Esophagus muscularis mucosa (tissue), 4 donors: ENCODE measurements at regions of chr10 and their contacts with region 1.

Region 1: GRCh38 chr10:13787015-13787421 is 200.3 kb downstream of the PRPF18 start:
- DNase-seq: no peak
- H3K4me3 ChIP-seq: no peak overlapping the region
- H3K27ac ChIP-seq: peak overlapping the region; percentile 49 to 72 (median 61)
- H3K4me1 ChIP-seq: peaks cover 28 to 34% (median 31%) of the 10 kb centered on the region in 4 donors
- H3K27me3 ChIP-seq: no peaks in the 10 kb centered on the region
- CTCF ChIP-seq: no peak
- EP300 ChIP-seq: no peak
- POLR2A ChIP-seq: no peak

Region 2: DNA sequence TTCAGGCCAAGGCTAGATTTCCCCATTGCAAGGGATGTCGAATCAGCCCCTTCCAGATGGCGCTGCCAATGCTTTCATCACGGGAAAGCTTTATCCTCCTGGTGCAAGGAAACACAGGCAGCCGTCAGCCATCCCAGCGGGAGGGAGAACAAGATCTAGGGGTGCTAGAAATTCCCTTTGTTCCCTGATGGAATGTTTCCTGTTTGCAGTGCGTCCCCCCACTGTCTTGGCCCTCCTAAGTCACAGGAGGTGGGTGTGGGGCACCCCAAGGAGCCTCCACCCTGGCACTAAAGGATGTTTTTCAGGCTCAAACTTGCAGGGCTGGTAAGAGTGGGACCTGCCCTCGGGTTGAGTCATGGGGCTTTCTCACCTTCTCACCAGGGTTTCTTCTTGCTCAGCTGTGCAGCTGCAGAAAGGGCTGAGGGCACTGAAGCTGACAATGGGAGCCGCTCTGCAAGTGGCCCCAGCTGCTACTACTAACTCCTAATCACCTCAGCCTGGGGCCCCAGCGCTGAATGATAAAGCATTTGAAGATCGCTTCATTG is 96.7 kb before region 1 on chr10:
- intact Hi-C with region 1: no loop called
- DNase-seq: no peak
- H3K4me3 ChIP-seq: no peak overlapping the region
- H3K27ac ChIP-seq: no peak overlapping the region
- H3K4me1 ChIP-seq: peaks cover 25 to 27% (median 25%) of the 10 kb centered on the region in 4 donors
- H3K27me3 ChIP-seq: no peaks in the 10 kb centered on the region
- CTCF ChIP-seq: no peak
- EP300 ChIP-seq: no peak
- POLR2A ChIP-seq: no peak

Region 3: DNA sequence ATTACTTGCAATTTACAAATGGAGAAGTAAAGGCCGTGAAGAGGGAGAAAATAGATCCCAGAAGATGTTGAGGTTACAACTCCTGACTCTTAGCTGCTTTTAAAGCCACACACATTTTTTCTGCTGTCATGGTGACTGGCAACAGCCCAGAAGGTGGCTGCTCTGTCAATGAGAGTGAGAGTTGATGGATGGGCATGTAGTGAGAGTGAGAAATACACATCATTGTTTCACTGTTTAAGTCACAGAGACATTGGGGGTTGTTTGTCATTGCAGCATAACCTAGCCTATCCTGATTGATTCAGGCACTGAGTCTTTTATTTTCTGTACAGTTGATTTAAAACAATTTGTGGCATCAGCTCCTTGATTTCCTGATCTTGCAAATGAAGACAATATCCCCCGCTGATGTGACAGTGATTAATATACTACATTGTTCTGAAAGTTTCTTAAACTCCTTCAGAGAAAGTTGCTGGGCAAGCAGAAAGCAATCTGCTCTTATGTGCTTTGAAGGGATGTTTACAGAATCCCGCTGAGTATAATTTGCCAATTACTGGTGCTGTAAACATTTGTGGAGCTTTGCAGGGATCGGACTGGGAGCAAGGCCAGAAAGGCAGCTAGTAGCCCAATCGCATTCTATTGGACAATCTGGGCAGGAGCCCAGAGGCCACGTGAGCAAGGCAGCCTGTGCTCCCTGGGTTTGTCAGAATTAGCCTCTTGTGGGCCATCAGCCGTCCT is 29.3 kb after region 1 on chr10:
- intact Hi-C with region 1: no loop called
- DNase-seq: no peak
- H3K4me3 ChIP-seq: no peak overlapping the region
- H3K27ac ChIP-seq: peak overlapping the region; percentile 40 to 68 (median 50)
- H3K4me1 ChIP-seq: peaks cover 18 to 38% (median 29%) of the 10 kb centered on the region in 4 donors
- H3K27me3 ChIP-seq: no peaks in the 10 kb centered on the region
- CTCF ChIP-seq: no peak
- EP300 ChIP-seq: no peak
- POLR2A ChIP-seq: no peak

Region 4: GRCh38 chr10:13956826-13957225 is 169.8 kb after region 1 on chr10:
- intact Hi-C with region 1: loop called (anchors 2 kb)
- DNase-seq: peak; percentile 94
- H3K4me3 ChIP-seq: peak overlapping the region in 1 of 4 donors; percentile 1
- H3K27ac ChIP-seq: peak overlapping the region; percentile 66 to 79 (median 76)
- H3K4me1 ChIP-seq: peaks cover 17 to 62% (median 55%) of the 10 kb centered on the region in 4 donors
- H3K27me3 ChIP-seq: no peaks in the 10 kb centered on the region
- CTCF ChIP-seq: peak; percentile 66 to 73 (median 70)
- EP300 ChIP-seq: no peak
- POLR2A ChIP-seq: no peak

Region 5: GRCh38 chr10:14093730-14094484 is 306.9 kb after region 1 on chr10:
- intact Hi-C with region 1: loop called (anchors 2 kb)
- DNase-seq: no peak
- H3K4me3 ChIP-seq: no peak overlapping the region
- H3K27ac ChIP-seq: no peak overlapping the region
- H3K4me1 ChIP-seq: peaks cover 0 to 12% (median 5%) of the 10 kb centered on the region in 4 donors
- H3K27me3 ChIP-seq: no peaks in the 10 kb centered on the region
- CTCF ChIP-seq: peak; percentile 29 to 60 (median 56)
- EP300 ChIP-seq: no peak
- POLR2A ChIP-seq: no peak

Region 6: GRCh38 chr10:14191871-14192270 is 404.9 kb after region 1 on chr10:
- intact Hi-C with region 1: loop called (anchors 10 kb)
- DNase-seq: no peak
- H3K4me3 ChIP-seq: no peak overlapping the region
- H3K27ac ChIP-seq: no peak overlapping the region
- H3K4me1 ChIP-seq: no peaks in the 10 kb centered on the region
- H3K27me3 ChIP-seq: no peaks in the 10 kb centered on the region
- CTCF ChIP-seq: no peak
- EP300 ChIP-seq: no peak
- POLR2A ChIP-seq: no peak

Region 7: DNA sequence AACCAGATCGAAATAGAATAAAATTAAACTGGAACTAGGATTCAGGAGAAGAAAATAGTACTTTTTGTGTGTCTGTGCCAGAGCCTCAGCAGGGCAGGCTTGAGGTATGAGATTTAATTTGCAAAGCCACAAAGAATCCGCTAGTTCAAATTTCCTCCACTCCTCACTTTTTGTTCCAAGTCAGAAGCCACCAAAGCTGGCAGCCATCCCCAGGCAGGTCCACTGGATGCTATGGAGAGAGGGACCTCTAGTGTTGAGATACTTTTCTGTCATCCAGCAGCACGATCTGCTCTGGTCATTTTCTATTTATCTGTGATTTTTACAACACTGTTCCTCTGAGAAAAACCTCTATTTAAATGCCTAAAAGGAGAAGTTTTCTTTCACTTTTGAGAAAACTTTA is 691.6 kb after region 1 on chr10:
- intact Hi-C with region 1: loop called (anchors 2 kb)
- DNase-seq: no peak
- H3K4me3 ChIP-seq: no peak overlapping the region
- H3K27ac ChIP-seq: no peak overlapping the region
- H3K4me1 ChIP-seq: peaks cover 0 to 19% (median 16%) of the 10 kb centered on the region in 4 donors
- H3K27me3 ChIP-seq: no peaks in the 10 kb centered on the region
- CTCF ChIP-seq: peak; percentile 56 to 72 (median 68)
- EP300 ChIP-seq: no peak
- POLR2A ChIP-seq: no peak